AG04450 (cell line): ENCODE measurements at regions of chr12 and their contacts with region 1.

Region 1: DNA sequence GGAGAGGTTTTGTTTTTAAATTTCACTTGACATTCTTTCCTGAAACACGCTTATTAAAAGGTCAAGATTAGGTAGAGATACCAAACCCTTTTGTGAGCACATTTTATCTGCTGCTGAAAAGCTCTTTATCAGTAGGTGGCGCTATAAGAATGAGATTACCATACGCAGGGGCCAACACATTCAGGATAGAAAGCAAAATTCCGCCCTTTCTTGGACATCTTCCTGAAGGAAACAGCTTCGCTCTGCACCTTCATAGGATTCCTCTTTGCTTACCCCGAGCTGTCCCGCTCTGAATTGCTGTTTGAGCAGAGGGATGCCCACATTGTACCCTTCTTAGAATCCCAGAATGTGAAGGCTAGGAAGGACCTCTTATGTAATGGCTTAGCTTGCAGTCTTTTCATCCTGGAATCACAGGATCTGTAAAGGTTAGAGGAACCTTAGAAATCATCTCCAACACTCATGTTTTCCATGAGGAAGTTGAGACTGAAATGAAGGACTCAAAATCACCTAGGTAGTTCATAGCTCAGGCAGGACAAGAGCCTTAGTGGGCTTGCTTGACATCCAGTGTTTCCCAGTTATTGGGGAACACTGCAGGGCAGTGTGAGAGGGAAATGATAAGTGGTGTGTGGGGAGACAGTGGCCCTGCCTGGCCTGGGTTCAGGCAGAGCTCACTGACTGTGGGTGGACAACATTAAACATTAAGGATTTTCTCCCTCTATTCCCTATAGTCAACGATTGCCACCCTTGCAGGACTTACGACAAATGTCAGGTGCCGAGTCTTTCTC is 38.7 kb upstream of the CRY1 start:
- DNase-seq: peak; percentile 51
- H3K4me3 ChIP-seq: no peak overlapping the region
- H3K27ac ChIP-seq: no peak overlapping the region
- H3K27me3 ChIP-seq: no peaks in the 10 kb centered on the region
- CTCF ChIP-seq: peak; percentile 89

Region 2: GRCh38 chr12:107152315-107152714 is 20.3 kb after region 1 on chr12:
- CTCF ChIA-PET with region 1: interaction called, 15 read pairs
- POLR2A ChIA-PET with region 1: no interaction called
- DNase-seq: no peak
- H3K4me3 ChIP-seq: no peak overlapping the region
- H3K27ac ChIP-seq: no peak overlapping the region
- H3K27me3 ChIP-seq: peaks cover 5% of the 10 kb centered on the region
- CTCF ChIP-seq: no peak

Region 3: DNA sequence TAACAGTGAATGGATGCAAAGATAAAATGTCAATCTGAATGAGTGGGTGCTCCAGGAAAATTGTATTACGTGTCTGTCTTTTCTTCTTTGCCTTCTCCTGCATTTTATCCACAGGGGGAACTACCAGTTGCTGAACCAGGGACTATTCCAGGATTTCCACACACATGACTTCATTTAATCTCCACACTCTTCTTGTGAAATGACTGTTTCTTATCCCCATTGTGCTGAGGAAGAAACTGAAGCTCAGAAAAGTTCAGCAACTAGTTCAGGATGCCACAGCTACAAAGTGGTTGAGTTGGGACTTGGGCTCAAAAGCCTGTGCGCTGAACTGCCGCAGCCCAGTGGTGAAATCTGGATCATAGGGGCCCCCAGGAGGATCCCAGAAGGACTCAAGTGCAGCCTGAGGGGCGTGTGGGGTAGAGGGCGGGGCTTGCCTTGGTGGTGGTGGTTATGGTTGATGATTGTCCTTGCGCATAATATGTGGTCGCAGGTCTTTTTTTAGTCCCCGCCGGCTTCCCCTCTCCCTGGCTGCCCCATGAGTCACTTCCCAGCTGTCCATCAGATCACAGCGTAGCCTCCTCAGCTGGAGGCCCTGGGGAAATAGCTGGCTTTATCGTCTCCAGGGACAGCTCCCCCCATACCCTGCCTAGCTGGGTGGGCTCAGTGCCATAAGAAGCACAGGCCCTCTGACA is 196.6 kb after region 1 on chr12:
- CTCF ChIA-PET with region 1: interaction called, 15 read pairs
- POLR2A ChIA-PET with region 1: no interaction called
- DNase-seq: no peak
- H3K4me3 ChIP-seq: no peak overlapping the region
- H3K27ac ChIP-seq: no peak overlapping the region
- H3K27me3 ChIP-seq: no peaks in the 10 kb centered on the region
- CTCF ChIP-seq: no peak

Region 4: DNA sequence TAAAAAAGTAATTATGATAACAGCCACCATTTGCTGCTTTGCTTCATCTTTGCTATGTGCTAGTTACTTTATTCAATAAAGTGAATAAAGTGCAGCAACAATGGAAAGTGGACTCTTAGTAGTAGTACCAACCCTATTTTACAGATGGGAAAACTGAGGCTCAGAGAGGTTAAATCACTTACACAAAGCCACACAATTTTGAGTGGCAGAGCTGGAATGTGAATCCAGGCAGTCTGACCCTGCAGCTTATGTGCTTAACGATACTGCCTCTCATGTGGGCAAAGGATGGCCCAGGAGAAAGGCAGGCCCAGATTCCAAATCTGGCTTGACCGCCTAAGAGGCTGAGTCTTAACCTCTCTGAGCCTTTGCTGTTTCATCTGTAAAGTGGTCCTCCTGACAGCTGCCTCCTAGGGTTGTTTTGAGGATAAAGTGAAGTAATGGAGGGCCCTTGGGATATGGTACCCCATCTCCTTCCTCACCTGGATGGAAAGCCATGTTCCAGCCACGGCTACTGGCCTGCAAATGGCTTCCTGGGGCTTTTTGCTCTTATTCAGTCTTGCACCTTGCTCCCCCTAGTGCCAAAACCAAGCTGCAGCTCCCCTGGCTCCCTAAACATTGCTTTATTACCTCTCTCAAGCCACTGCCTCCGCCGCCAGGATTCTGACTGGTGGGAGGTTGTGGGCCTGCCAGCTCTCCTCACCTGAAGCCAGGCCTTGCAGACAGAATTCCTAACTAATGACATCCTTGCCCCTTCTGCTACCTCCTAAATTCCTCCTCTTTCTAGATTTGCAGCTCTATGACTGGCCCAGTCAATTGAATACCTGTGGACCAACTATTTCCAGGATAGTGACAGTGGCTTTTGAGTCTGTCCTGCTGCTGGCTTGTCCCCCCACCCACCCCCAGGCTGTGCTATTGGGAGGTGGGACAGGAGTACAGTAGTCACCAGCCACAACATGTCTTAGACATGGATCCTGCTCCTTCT is 270.3 kb after region 1 on chr12:
- CTCF ChIA-PET with region 1: interaction called, 149 read pairs
- POLR2A ChIA-PET with region 1: no interaction called
- DNase-seq: no peak
- H3K4me3 ChIP-seq: no peak overlapping the region
- H3K27ac ChIP-seq: no peak overlapping the region
- H3K27me3 ChIP-seq: no peaks in the 10 kb centered on the region
- CTCF ChIP-seq: peak; percentile 82

Region 5: DNA sequence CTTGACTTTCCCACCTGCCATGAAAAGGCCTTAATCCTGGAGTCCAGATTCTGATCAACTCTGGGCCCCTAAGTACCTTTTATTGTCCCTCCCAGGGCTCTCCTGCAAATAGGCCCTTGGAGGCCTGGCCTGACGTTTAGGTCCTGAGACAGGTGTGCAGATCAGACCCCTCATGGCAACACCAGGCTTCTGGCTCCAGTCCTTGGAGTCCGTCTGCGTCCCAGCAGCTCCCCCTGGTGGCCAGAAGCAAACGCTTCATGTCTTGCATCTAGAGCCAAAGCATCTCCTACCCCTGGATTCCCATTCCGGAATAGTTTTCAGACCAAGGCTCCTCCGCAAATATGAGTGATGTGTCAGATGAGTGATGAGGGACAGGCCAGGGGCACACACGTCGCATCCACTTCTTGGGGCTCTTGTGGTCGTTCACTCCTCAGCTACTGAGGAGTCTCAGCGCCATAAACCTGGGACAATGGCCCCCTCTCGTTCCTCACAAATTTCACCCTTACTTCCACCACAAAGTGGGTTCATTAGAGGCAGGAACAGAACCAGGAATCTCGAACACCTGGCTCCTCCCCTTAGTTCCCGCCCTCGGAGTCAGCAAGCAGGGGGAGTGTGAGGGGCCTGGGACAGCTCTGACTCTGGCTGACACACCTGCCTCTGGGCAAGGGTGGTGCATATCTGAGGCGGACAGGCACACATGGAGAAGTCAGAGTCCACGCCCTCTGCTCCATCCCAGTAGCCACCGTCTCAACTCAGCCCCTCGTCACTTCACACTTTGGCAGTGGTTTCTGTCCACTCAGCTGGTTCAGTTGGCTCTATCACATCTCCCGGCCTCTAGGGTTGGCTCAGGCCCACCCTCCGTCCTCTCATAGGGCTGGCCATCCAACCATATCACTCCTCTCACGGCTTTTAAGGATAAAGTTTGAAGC is 475.7 kb after region 1 on chr12:
- CTCF ChIA-PET with region 1: interaction called, 401 read pairs
- POLR2A ChIA-PET with region 1: no interaction called
- DNase-seq: peak; percentile 51
- H3K4me3 ChIP-seq: no peak overlapping the region
- H3K27ac ChIP-seq: no peak overlapping the region
- H3K27me3 ChIP-seq: no peaks in the 10 kb centered on the region
- CTCF ChIP-seq: peak; percentile 96

Region 6: DNA sequence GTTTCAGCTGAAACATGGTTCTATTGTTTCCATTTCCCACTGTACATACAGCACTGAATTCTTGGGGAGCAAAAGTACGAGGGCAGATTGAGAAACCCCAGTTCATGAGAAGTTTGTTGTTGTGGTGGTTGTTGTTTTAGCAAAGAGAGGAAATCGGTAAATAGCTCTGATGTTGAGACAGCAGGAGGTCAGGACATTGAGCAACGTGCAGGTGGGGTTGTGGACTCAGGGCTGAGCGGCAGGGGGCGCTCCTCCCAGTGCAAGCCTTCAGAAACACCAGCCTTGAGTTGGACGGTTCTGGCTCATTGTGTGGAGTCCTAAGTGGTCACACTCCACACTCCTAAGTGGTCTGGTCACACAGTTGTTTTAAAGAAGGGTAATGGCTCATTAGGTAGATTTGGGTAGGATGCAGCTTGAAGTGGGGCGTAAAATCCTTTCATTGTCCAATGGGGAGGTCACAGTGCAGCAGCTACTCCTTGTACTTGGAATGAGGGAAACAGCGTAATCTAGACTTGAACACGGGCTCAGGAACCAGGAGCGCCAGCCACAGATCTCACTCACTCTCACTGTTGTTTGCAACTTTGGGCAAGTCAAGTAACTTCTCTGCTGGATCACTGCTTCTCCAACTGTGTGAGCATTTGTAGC is 539.1 kb after region 1 on chr12:
- CTCF ChIA-PET with region 1: interaction called, 26 read pairs
- POLR2A ChIA-PET with region 1: no interaction called
- DNase-seq: no peak
- H3K4me3 ChIP-seq: no peak overlapping the region
- H3K27ac ChIP-seq: no peak overlapping the region
- H3K27me3 ChIP-seq: peaks cover 40% of the 10 kb centered on the region
- CTCF ChIP-seq: peak; percentile 53